ENCODE measurements at regions of chr7 and their contacts with region 1.

Region 1: GRCh38 chr7:116929914-116930913 is 23.1 kb upstream of the ST7 start:
- DNase-seq: peak; percentile 51 to 75
- H3K4me3 ChIP-seq: no peak overlapping the region
- H3K27ac ChIP-seq: no peak overlapping the region
- H3K4me1 ChIP-seq: no peaks in the 10 kb centered on the region
- H3K27me3 ChIP-seq: no peaks in the 10 kb centered on the region
- CTCF ChIP-seq: peak; percentile 95

Region 2: DNA sequence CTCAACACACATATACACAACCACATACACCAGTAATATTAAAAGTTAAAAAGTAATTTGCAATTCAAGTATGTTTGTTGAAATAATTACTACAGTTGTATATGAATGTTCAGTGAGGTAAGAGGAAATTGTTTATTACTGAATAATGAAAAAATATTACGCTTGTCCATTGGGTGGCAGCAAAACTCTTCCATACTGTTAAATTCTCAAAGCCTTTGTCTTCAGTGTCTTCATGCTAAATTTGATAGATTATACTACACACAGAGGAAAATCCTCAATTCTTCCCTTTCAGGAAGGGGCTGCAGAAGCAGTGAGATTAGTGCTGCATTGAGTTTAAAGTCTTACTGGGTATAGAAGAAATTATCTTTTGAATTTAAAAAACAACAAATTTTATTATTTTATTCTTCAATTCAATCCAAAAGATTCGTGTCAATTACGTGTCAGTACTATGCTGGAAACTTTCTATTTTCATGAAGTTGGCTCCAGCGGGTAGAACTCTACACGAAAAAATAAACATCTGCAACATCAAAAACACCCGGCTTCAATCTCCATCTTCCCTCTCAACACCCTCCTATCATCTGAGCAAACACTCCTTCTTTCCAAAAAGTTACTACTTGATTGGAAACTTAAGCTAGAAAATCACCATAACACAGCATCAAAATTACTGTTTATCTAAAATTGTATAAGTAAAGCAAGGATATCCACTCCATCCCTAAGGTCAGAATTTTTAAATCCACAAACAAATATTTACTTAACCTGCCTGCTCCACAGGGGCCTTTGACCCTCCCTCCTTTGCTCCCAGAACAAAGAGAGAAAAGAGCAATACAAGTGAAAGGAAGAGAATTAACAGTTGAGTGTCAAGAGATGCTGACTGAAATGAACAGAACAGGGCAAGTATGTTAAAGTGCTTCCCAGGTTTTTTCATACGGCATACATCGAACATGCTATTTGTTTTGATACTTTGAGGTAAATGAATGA is 756.9 kb before region 1 on chr7:
- CTCF ChIA-PET with region 1: no interaction called
- POLR2A ChIA-PET with region 1: interaction called, 6 read pairs
- intact Hi-C with region 1: loop called (anchors 5 kb)
- DNase-seq: peak; percentile 26 to 48
- H3K4me3 ChIP-seq: no peak overlapping the region
- H3K27ac ChIP-seq: no peak overlapping the region
- H3K4me1 ChIP-seq: peaks cover 11% of the 10 kb centered on the region; the same call in 1 of the 2 replicates
- H3K27me3 ChIP-seq: no peaks in the 10 kb centered on the region
- CTCF ChIP-seq: peak; percentile 84

Region 3: DNA sequence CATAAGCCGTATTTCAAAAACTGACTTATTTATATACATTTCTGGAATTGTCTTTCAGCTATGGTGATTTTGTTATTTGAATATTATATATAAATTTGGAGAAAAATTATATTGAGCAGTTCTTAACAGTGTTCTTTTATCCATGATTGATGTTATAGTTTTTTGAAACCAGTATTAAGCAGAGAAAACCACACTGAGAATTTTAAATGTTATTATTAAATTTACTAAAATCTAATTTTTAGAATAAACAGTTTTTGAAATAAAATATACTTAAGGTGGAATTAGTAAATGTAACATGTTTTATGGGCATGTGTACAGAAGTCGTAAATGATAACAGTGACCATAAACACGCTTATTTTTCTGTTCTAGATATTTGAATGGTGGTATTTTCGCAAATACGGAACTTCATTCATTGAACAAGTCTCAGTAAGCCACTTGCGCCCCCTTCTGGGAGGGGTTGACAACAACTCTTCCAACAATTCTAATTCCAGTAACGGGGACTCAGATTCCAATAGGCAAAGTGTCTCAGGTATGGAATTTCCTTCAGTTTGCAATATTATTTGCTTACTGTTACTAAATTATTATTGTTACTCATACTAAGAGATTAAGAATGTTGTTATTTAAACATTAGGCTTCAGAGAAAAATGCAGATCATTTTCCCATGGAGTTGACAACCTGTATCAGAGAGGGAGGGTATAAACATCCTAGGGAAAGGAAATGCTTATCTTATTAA is 189.1 kb after region 1 on chr7:
- CTCF ChIA-PET with region 1: no interaction called
- POLR2A ChIA-PET with region 1: no interaction called
- intact Hi-C with region 1: loop called (anchors 1 kb)
- DNase-seq: peak in 1 of 2 experiments; percentile 64
- H3K4me3 ChIP-seq: no peak overlapping the region
- H3K27ac ChIP-seq: no peak overlapping the region
- H3K4me1 ChIP-seq: peaks cover 5% of the 10 kb centered on the region; the same call in 1 of the 2 replicates
- H3K27me3 ChIP-seq: no peaks in the 10 kb centered on the region
- CTCF ChIP-seq: peak; percentile 80

Region 4: DNA sequence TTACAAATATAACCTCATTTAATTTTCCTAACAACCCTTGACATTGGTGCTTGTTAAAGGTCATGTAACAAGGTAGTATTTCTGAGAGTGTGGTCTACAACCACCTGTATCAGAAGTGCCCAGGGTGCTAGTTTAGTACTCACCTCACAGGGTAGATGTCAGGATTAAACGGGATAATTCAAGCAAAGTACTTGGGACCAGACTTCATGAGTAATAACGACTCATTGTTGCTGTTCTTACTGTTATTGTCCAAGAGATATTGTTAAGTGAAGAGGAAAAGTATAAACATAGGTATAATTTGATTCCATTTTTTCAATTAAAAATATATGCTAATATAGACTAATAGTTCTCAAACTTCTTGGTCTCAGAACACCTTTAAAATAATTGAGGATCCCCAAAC is 213.4 kb after region 1 on chr7:
- CTCF ChIA-PET with region 1: interaction called, 20 read pairs
- POLR2A ChIA-PET with region 1: no interaction called
- intact Hi-C with region 1: no loop called
- DNase-seq: no peak
- H3K4me3 ChIP-seq: no peak overlapping the region
- H3K27ac ChIP-seq: no peak overlapping the region
- H3K4me1 ChIP-seq: 0 out of 2 replicates have a peak, but pooled peaks cover 5% of the 10 kb centered on the region
- H3K27me3 ChIP-seq: no peaks in the 10 kb centered on the region
- CTCF ChIP-seq: no peak

Region 5: GRCh38 chr7:117212969-117213877 is 283.0 kb after region 1 on chr7:
- CTCF ChIA-PET with region 1: interaction called, 5 read pairs
- POLR2A ChIA-PET with region 1: no interaction called
- intact Hi-C with region 1: loop called (anchors 5 kb)
- DNase-seq: peak in 1 of 2 experiments; percentile 53
- H3K4me3 ChIP-seq: no peak overlapping the region
- H3K27ac ChIP-seq: no peak overlapping the region
- H3K4me1 ChIP-seq: no peaks in the 10 kb centered on the region
- H3K27me3 ChIP-seq: no peaks in the 10 kb centered on the region
- CTCF ChIP-seq: peak; percentile 90

Region 6: GRCh38 chr7:118573085-118573484 is 1642.9 kb after region 1 on chr7:
- CTCF ChIA-PET with region 1: no interaction called
- POLR2A ChIA-PET with region 1: no interaction called
- intact Hi-C with region 1: no loop called
- DNase-seq: no peak
- H3K4me3 ChIP-seq: no peak overlapping the region
- H3K27ac ChIP-seq: no peak overlapping the region
- H3K4me1 ChIP-seq: no peaks in the 10 kb centered on the region
- H3K27me3 ChIP-seq: no peaks in the 10 kb centered on the region
- CTCF ChIP-seq: no peak

Measured in PC-9 (cell line).